ENCODE measurements at regions of chr11 and their contacts with region 1.

Region 1: DNA sequence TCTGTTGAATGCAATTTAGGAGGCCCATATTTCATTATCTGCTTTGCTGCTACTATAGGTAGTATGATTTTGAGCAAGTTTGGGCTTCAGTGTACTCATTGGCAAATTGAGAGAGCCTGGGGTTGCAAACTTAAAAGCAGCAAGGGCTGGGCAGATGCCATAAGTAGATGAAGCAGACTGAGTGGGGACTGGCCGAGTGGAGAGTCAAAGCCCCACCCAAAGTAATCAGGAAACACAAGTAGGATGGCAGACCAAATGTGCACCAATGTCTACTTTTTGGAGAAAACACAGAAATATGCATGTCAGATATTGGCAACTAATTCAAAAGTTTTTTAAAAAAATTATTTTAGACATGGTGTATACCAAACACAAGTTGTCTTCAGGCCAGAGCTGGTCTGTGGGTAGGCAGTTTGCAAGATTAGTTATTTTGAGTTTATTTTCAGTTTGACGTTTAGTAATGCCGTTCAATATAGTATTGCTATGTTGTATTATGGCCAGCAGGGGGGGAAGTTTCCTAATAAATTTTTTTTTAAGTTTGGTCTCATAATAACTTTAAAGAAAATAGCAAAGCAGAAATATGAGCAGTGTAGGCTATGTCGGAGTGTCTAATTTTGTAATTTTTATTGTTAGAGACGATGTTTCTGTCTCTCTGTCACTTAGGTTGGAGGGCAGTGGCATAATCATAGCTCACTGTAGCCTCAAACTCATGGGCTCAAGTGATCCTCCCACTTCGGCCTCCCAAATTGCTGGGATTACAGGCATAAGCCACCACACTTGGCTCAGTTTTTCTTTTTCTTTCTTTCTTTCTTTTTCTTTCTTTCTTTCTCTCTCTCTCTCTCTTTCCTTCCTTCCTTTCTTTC is 105.1 kb downstream of the HIPK3 start:
- DNase-seq: peak in 7 of 9 donors; percentile 20 to 45 (median 35)
- ATAC-seq: peak; percentile 69
- H3K4me3 ChIP-seq: no peak overlapping the region
- H3K4me3 Mint-ChIP-seq: peak overlapping the region in 1 of 10 donors; percentile 53
- H3K27ac ChIP-seq: no peak overlapping the region
- H3K27ac Mint-ChIP-seq: no peak overlapping the region
- H3K4me1 ChIP-seq: no peaks in the 10 kb centered on the region
- H3K4me1 Mint-ChIP-seq: peaks cover 0 to 6% (median 2%) of the 10 kb centered on the region in 7 donors
- H3K27me3 ChIP-seq: no peaks in the 10 kb centered on the region
- H3K27me3 Mint-ChIP-seq: peaks cover 5 to 29% (median 14%) of the 10 kb centered on the region in 5 donors

Region 2: DNA sequence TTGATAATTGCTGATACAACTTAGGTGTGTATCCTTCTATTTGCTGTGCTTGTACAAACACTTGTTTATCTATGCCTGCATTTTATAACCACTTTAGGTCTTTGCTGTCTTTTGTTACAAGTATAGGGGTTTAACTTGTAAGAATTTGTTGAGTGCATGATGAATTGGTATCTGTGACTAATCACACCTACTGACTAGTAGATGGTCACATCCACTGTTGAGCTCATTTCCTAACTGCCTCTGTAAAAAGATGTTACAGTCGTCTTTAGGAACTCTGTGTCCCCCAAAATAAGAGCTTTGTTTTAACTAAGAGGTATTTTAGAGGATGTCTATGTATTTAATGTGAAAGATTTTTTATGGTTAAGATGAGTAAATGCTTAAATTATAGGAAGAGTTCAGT is 44.6 kb before region 1 on chr11:
- CTCF ChIA-PET with region 1: no interaction called
- POLR2A ChIA-PET with region 1: no interaction called
- intact Hi-C with region 1: no loop called
- DNase-seq: no peak
- ATAC-seq: no peak
- H3K4me3 ChIP-seq: no peak overlapping the region
- H3K4me3 Mint-ChIP-seq: no peak overlapping the region
- H3K27ac ChIP-seq: no peak overlapping the region
- H3K27ac Mint-ChIP-seq: peak overlapping the region in 3 of 9 donors; percentile 5 to 83 (median 35)
- H3K4me1 ChIP-seq: peaks cover 0 to 11% of the 10 kb centered on the region in 2 donors
- H3K4me1 Mint-ChIP-seq: peaks cover 4 to 42% (median 31%) of the 10 kb centered on the region in 7 donors
- H3K27me3 ChIP-seq: no peaks in the 10 kb centered on the region
- H3K27me3 Mint-ChIP-seq: no peaks in the 10 kb centered on the region

Region 3: DNA sequence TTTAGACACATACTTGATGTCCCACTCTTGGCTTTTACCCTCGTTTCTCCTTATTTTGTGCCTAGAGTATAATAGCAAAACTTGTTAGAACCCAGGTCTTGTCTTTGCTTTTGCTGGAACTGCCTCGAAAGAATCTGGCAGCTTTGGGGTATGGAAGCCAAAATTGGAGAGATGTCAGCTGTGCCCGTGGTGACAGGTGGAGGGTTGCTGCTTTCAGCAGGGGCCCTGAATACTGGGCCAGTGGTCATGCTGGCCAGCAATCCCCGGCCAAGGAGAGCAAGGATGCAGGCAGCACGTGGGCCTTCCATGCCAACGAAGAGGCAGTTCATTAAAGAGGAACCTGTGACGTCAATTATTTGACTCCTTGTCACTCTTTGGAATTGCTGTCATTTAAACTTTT is 76.0 kb after region 1 on chr11:
- CTCF ChIA-PET with region 1: no interaction called
- POLR2A ChIA-PET with region 1: no interaction called
- intact Hi-C with region 1: no loop called
- DNase-seq: no peak
- ATAC-seq: no peak
- H3K4me3 ChIP-seq: no peak overlapping the region
- H3K4me3 Mint-ChIP-seq: no peak overlapping the region
- H3K27ac ChIP-seq: no peak overlapping the region
- H3K27ac Mint-ChIP-seq: no peak overlapping the region
- H3K4me1 ChIP-seq: no peaks in the 10 kb centered on the region
- H3K4me1 Mint-ChIP-seq: no peaks in the 10 kb centered on the region
- H3K27me3 ChIP-seq: no peaks in the 10 kb centered on the region
- H3K27me3 Mint-ChIP-seq: peaks cover 0 to 10% (median 3%) of the 10 kb centered on the region in 5 donors

Region 4: GRCh38 chr11:33687733-33688479 is 325.6 kb after region 1 on chr11:
- CTCF ChIA-PET with region 1: no interaction called
- POLR2A ChIA-PET with region 1: no interaction called
- intact Hi-C with region 1: loop called in 1 of 2 experiments (anchors 5 kb)
- DNase-seq: no peak
- ATAC-seq: no peak
- H3K4me3 ChIP-seq: no peak overlapping the region
- H3K4me3 Mint-ChIP-seq: no peak overlapping the region
- H3K27ac ChIP-seq: no peak overlapping the region
- H3K27ac Mint-ChIP-seq: no peak overlapping the region
- H3K4me1 ChIP-seq: no peaks in the 10 kb centered on the region
- H3K4me1 Mint-ChIP-seq: peaks cover 0 to 3% (median 0%) of the 10 kb centered on the region in 7 donors
- H3K27me3 ChIP-seq: peaks cover 0 to 4% of the 10 kb centered on the region in 2 donors
- H3K27me3 Mint-ChIP-seq: peaks cover 11 to 29% (median 16%) of the 10 kb centered on the region in 5 donors

Measured in naive thymus-derived CD4-positive, alpha-beta T cell (primary cell).